ENCODE measurements at regions of chr5 and their contacts with region 1.

Region 1: GRCh38 chr5:38208782-38209378 is 49.5 kb upstream of the EGFLAM start:
- DNase-seq: peak; percentile 37
- H3K4me3 ChIP-seq: no peak overlapping the region
- H3K27ac ChIP-seq: no peak overlapping the region
- H3K4me1 ChIP-seq: no peaks in the 10 kb centered on the region
- H3K27me3 ChIP-seq: no peaks in the 10 kb centered on the region
- CTCF ChIP-seq: peak; percentile 39 to 75

Region 2: DNA sequence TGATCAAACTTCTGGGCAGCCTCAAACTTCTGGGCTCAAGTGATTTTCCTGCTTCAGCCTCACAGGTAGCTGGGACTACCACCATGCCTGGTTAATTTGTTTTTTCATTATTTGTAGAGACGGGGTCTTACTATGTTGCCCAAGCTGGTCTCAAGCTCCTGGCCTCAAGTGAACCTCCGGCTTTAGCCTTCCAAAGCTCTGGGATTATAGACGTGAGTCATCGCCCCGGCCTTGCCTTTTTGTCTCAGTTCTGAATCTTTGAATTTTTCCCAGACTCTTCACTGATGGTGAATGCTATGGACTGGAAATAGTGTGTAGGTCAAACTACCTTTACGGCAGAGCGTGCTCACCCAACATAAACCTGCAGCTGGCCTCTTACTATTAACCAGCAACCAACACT is 17.2 kb after region 1 on chr5:
- CTCF ChIA-PET with region 1: no interaction called
- dilution Hi-C with region 1: no loop called
- in situ Hi-C with region 1: no loop called
- intact Hi-C with region 1: no loop called
- DNase-seq: no peak
- H3K4me3 ChIP-seq: no peak overlapping the region
- H3K27ac ChIP-seq: no peak overlapping the region
- H3K4me1 ChIP-seq: no peaks in the 10 kb centered on the region
- H3K27me3 ChIP-seq: peaks cover 2% of the 10 kb centered on the region
- CTCF ChIP-seq: no peak

Region 3: DNA sequence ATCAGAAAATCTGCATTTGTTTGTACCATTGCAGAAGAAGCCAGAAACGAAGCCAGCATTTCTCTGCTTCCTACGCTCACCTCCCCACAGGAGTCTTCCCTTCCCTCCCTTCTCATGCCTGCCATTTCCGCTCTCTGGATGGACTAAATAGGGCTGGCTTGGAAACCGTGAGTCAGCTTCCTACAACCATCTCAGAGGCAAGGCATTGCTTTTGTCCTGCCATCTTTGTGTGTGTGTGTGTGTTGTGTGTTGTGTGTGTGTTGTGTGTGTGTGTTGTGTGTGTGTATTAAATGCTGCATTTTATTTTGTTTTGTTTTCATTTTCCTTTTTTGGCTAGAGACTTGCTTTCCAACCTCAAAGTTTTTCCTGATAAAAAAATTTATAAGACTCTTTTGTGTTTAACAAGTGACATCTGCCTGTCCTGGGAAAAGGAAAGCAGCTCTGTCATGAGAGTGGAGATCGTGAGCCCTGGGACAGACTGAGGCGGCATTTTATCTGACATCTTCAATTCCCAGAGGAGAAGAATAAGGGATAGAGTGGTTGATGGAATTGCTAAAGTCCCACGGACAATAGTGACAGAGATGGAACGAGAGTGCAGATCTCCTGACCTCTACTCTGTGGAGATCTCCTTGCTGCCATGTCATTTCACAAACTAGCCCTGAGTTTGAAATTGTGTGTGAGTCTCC is 42.0 kb after region 1 on chr5:
- CTCF ChIA-PET with region 1: no interaction called
- dilution Hi-C with region 1: no loop called
- in situ Hi-C with region 1: no loop called
- intact Hi-C with region 1: no loop called
- DNase-seq: no peak
- H3K4me3 ChIP-seq: no peak overlapping the region
- H3K27ac ChIP-seq: no peak overlapping the region
- H3K4me1 ChIP-seq: no peaks in the 10 kb centered on the region
- H3K27me3 ChIP-seq: peaks cover 7% of the 10 kb centered on the region
- CTCF ChIP-seq: no peak

Region 4: GRCh38 chr5:38265546-38266179 is 56.8 kb after region 1 on chr5:
- CTCF ChIA-PET with region 1: no interaction called
- dilution Hi-C with region 1: no loop called
- in situ Hi-C with region 1: no loop called
- intact Hi-C with region 1: loop called (anchors 2 kb)
- DNase-seq: peak; percentile 29
- H3K4me3 ChIP-seq: no peak overlapping the region
- H3K27ac ChIP-seq: no peak overlapping the region
- H3K4me1 ChIP-seq: no peaks in the 10 kb centered on the region
- H3K27me3 ChIP-seq: peaks cover 7% of the 10 kb centered on the region
- CTCF ChIP-seq: peak; percentile 73 to 81

Region 5: DNA sequence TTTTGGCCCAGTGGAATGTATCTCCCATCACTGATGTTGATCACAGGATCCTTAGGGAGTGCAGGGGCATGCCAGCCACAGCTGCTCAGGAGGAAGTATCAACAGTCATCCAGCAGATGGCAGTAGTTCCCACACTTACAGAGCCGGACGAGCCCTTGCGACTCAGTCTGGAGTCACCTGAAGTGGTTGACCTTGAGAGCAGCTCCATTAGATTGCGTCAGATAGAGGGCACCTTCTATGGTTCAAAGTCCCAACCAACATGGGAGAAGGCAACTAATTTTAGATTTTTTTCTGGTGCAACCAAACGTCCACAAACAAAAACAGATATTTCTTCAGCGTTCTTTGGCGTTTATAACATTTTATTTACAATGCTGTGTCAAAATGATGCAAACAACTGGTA is 174.0 kb after region 1 on chr5:
- CTCF ChIA-PET with region 1: no interaction called
- dilution Hi-C with region 1: no loop called
- in situ Hi-C with region 1: no loop called
- intact Hi-C with region 1: loop called (anchors 2 kb)
- DNase-seq: peak; percentile 50
- H3K4me3 ChIP-seq: no peak overlapping the region
- H3K27ac ChIP-seq: no peak overlapping the region
- H3K4me1 ChIP-seq: no peaks in the 10 kb centered on the region
- H3K27me3 ChIP-seq: peaks cover 3% of the 10 kb centered on the region
- CTCF ChIP-seq: peak; percentile 86 to 92

Region 6: DNA sequence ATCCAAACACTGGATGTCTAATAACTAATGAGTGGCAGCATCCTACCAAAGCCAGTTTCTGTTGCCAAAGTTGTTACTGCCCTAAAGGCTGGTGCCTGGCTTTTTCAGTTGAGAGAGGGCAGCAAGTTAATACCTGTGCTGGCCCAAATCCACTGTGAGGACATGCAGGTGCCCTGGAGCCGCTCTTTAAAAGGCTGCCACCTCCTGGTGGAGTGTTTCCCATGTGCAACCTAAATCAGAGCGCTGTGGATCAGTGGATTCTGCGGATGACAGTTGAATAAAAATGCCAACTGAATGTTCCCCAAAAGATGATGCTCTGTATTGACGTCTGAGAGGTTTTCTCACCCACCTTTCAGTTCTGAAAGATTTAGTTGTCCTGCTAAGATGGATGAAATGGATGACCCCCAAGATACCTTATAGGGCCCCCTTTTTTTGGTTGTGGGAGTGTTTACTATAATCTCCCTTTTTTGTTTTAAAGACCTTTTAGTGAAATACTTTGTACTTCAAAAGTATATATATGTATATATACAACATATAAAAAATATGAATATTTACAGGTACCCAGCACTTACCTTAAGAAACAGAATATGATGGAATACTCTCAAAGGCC is 195.9 kb after region 1 on chr5:
- CTCF ChIA-PET with region 1: no interaction called
- dilution Hi-C with region 1: no loop called
- in situ Hi-C with region 1: loop called (anchors 5 to 10 kb)
- intact Hi-C with region 1: loop called (anchors 1 kb)
- DNase-seq: peak; percentile 36
- H3K4me3 ChIP-seq: no peak overlapping the region
- H3K27ac ChIP-seq: no peak overlapping the region
- H3K4me1 ChIP-seq: no peaks in the 10 kb centered on the region
- H3K27me3 ChIP-seq: no peaks in the 10 kb centered on the region
- CTCF ChIP-seq: peak; percentile 59 to 87

Region 7: GRCh38 chr5:38551030-38552017 is 342.4 kb after region 1 on chr5:
- CTCF ChIA-PET with region 1: no interaction called
- dilution Hi-C with region 1: no loop called
- in situ Hi-C with region 1: no loop called
- intact Hi-C with region 1: loop called (anchors 1 kb)
- DNase-seq: peak; percentile 23
- H3K4me3 ChIP-seq: no peak overlapping the region
- H3K27ac ChIP-seq: no peak overlapping the region
- H3K4me1 ChIP-seq: peaks cover 15% of the 10 kb centered on the region
- H3K27me3 ChIP-seq: no peaks in the 10 kb centered on the region
- CTCF ChIP-seq: peak; percentile 77 to 92

Region 8: GRCh38 chr5:38576442-38576841 is 367.6 kb after region 1 on chr5:
- CTCF ChIA-PET with region 1: no interaction called
- dilution Hi-C with region 1: no loop called
- in situ Hi-C with region 1: no loop called
- intact Hi-C with region 1: no loop called
- DNase-seq: no peak
- H3K4me3 ChIP-seq: no peak overlapping the region
- H3K27ac ChIP-seq: no peak overlapping the region
- H3K4me1 ChIP-seq: no peaks in the 10 kb centered on the region
- H3K27me3 ChIP-seq: no peaks in the 10 kb centered on the region
- CTCF ChIP-seq: no peak

Measured in mammary epithelial cell (primary cell).